ENCODE measurements at regions of chr2 and their contacts with region 1.

Region 1: GRCh38 chr2:227774011-227774624 is 28.4 kb downstream of the SCYGR8 start:
- DNase-seq: no peak
- ATAC-seq: peak; percentile 94
- H3K4me3 ChIP-seq: no peak overlapping the region
- H3K27ac ChIP-seq: no peak overlapping the region
- H3K4me1 ChIP-seq: no peaks in the 10 kb centered on the region
- H3K27me3 ChIP-seq: no peaks in the 10 kb centered on the region
- CTCF ChIP-seq: peak; percentile 22 to 46 (median 43); a peak in 5 of 6 replicates
- EP300 ChIP-seq: no peak
- POLR2A ChIP-seq: no peak
- RAD21 ChIP-seq: peak; percentile 43

Region 2: DNA sequence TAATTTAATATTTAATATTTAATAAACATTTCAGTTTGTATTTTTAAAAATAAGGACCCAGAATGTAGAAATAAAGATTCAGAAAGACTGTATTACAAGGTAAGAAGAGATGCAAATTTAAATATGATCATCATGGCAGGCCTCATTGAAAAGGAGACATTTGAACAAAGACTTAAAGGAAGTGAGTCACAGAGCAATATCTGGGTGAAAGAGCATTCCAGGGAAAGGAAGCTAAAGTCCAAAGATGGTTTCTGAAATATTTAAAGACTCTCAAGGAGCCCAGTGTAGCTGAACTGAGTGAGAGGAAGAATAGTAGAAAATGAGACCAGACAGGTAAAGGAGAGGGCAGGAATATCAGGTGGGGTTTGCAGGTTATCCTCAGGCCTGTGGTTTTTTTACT is 150.9 kb before region 1 on chr2:
- CTCF ChIA-PET with region 1: no interaction called
- POLR2A ChIA-PET with region 1: no interaction called
- RAD21 ChIA-PET with region 1: no interaction called
- SMC1A ChIA-PET with region 1: no interaction called
- in situ Hi-C with region 1: no loop called
- intact Hi-C with region 1: no loop called
- DNase-seq: no peak
- ATAC-seq: no peak
- H3K4me3 ChIP-seq: no peak overlapping the region
- H3K27ac ChIP-seq: no peak overlapping the region
- H3K4me1 ChIP-seq: peaks cover 5% of the 10 kb centered on the region; the same call in 1 of the 2 replicates
- H3K27me3 ChIP-seq: no peaks in the 10 kb centered on the region
- CTCF ChIP-seq: no peak
- EP300 ChIP-seq: no peak
- POLR2A ChIP-seq: no peak
- RAD21 ChIP-seq: no peak

Region 3: DNA sequence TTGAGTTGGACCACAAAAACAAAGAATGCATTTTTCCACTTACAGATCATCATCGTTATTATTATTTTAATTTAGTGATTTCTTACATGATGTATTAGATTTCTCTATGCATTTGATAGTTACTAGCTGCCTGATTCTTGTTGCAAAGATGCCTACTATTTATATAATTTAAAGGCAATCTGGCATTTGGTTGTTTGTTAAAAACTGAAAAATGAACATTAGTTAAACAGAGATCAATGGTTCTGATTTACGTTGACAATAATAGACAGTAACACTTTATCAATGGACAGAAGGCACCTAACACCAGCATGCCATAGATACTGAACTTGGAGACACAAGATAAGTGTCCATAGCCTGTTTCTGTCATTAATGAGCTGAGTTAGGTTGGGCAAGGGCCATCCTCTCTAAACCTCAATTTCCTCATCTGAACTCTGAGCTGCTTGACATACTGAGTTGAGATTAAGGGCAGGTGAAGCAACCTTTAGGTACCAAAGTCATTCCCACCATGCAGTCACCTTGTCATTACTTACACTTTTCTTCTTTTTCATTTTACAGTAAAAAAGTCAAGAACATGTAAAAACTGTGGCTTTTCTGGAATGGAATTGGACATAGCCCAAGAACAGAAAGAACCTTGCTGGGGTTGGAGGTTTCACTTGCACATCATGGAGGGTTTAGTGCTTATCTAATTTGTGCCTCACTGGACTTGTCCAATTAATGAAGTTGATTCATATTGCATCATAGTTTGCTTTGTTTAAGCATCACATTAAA is 42.6 kb after region 1 on chr2:
- CTCF ChIA-PET with region 1: interaction called, 10 read pairs
- POLR2A ChIA-PET with region 1: no interaction called
- RAD21 ChIA-PET with region 1: no interaction called
- SMC1A ChIA-PET with region 1: interaction called, 120 read pairs
- in situ Hi-C with region 1: no loop called
- intact Hi-C with region 1: no loop called
- DNase-seq: no peak
- ATAC-seq: peak; percentile 23; the same call in 2 of the 3 replicates
- H3K4me3 ChIP-seq: no peak overlapping the region
- H3K27ac ChIP-seq: no peak overlapping the region
- H3K4me1 ChIP-seq: no peaks in the 10 kb centered on the region
- H3K27me3 ChIP-seq: no peaks in the 10 kb centered on the region
- CTCF ChIP-seq: no peak
- EP300 ChIP-seq: no peak
- POLR2A ChIP-seq: no peak
- RAD21 ChIP-seq: no peak

Region 4: GRCh38 chr2:227855440-227855839 is 81.3 kb after region 1 on chr2:
- CTCF ChIA-PET with region 1: interaction called, 387 read pairs
- POLR2A ChIA-PET with region 1: interaction called, 8 read pairs
- RAD21 ChIA-PET with region 1: interaction called, 92 read pairs
- SMC1A ChIA-PET with region 1: interaction called, 133 read pairs
- in situ Hi-C with region 1: no loop called
- intact Hi-C with region 1: no loop called
- DNase-seq: no peak
- ATAC-seq: peak; percentile 76
- H3K4me3 ChIP-seq: no peak overlapping the region
- H3K27ac ChIP-seq: no peak overlapping the region
- H3K4me1 ChIP-seq: no peaks in the 10 kb centered on the region
- H3K27me3 ChIP-seq: no peaks in the 10 kb centered on the region
- CTCF ChIP-seq: no peak
- EP300 ChIP-seq: no peak
- POLR2A ChIP-seq: no peak
- RAD21 ChIP-seq: no peak

Measured in GM12878 (cell line).